Activated CD4-positive, alpha-beta T cell treated with anti-CD3 and anti-CD28 coated beads for 36 hours (primary cell): ENCODE measurements at regions of chr19 and their contacts with region 1.

Region 1: GRCh38 chr19:14198384-14199376 is 7.3 kb downstream of the ADGRL1 start:
- DNase-seq: peak; percentile 21
- ATAC-seq: no peak
- H3K4me3 Mint-ChIP-seq: no peak overlapping the region
- H3K27ac Mint-ChIP-seq: no peak overlapping the region
- H3K4me1 Mint-ChIP-seq: peaks cover 21% of the 10 kb centered on the region
- H3K27me3 Mint-ChIP-seq: no peaks in the 10 kb centered on the region

Region 2: GRCh38 chr19:14479975-14480699 is 281.5 kb after region 1 on chr19:
- CTCF ChIA-PET with region 1: interaction called, 3 read pairs
- POLR2A ChIA-PET with region 1: no interaction called
- intact Hi-C with region 1: loop called in 1 of 2 experiments (anchors 5 kb)
- DNase-seq: peak; percentile 84
- ATAC-seq: peak; percentile 60
- H3K4me3 Mint-ChIP-seq: no peak overlapping the region
- H3K27ac Mint-ChIP-seq: no peak overlapping the region
- H3K4me1 Mint-ChIP-seq: peaks cover 14% of the 10 kb centered on the region
- H3K27me3 Mint-ChIP-seq: no peaks in the 10 kb centered on the region